ENCODE measurements at regions of chr19 and their contacts with region 1.

Region 1: DNA sequence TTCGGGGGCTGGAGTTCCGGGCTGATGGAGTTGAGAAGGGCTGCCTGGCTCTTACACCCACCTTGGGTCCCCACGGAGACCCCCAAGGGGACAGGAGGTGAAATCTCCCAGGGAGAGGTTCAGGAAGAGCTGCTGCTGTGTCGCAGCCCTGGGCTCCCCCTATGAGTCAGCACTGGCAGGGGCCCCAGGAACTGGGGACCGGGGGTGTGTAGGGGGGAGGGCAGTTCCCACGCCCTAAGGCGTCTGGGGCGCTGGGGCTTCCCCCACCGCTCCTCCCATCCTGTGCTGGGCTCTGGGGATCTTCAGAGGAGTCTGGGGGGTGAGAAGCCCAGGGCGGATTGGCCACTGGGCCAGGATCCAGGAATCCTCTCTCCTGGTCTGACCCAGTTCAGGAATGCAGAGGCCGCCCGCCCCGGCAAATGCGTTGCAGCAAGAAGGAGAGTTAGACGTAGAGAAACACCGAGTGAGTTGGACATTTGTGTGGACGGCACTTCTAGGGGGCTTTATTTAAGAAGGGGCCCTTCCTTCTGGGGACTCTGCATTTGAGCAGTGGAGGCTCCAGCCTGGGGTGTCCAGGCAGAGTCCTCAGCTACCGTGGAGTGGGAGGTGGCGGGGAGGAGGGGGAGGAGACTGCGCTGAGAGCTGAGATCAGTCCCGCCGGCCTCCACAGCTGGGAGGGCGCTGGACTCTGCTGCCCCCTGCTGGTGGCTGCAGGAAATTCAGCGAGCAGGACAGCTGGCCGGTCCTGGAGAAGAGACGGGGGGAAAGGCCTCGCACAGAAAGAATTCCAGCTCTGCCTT is 15.0 kb upstream of the NANOS3 start:
- DNase-seq: peak; percentile 84 to 94 (median 86)
- H3K4me3 ChIP-seq: peak overlapping the region; percentile 91
- H3K4me3 Mint-ChIP-seq: peak overlapping the region; percentile 93 to 99 (median 98)
- H3K27ac ChIP-seq: peak overlapping the region; percentile 96
- H3K27ac Mint-ChIP-seq: peak overlapping the region; percentile 99 to 100 (median 100)
- H3K4me1 ChIP-seq: peaks cover 33% of the 10 kb centered on the region
- H3K4me1 Mint-ChIP-seq: peaks cover 33 to 51% (median 48%) of the 10 kb centered on the region in 3 donors
- H3K27me3 ChIP-seq: peaks cover 21% of the 10 kb centered on the region
- H3K27me3 Mint-ChIP-seq: peaks cover 22 to 28% of the 10 kb centered on the region in 2 donors

Region 2: GRCh38 chr19:13774217-13775191 is 87.4 kb before region 1 on chr19 and contains the start of gene C19orf53:
- CTCF ChIA-PET with region 1: interaction called, 29 read pairs
- POLR2A ChIA-PET with region 1: no interaction called
- DNase-seq: peak; percentile 80 to 88 (median 81)
- H3K4me3 ChIP-seq: peak within 1 kb of the TSS; percentile 87
- H3K4me3 Mint-ChIP-seq: peak within 1 kb of the TSS; percentile 90 to 100 (median 99)
- H3K27ac ChIP-seq: peak within 1 kb of the TSS; percentile 84
- H3K27ac Mint-ChIP-seq: peak within 1 kb of the TSS; percentile 80 to 100 (median 98)
- H3K4me1 ChIP-seq: peaks cover 20% of the 10 kb centered on the region
- H3K4me1 Mint-ChIP-seq: peaks cover 22 to 28% (median 28%) of the 10 kb centered on the region in 3 donors
- H3K27me3 ChIP-seq: no peaks in the 10 kb centered on the region
- H3K27me3 Mint-ChIP-seq: no peaks in the 10 kb centered on the region
- total RNA-seq, gene C19orf53: 131 to 163 TPM

Region 3: GRCh38 chr19:13794757-13795589 is 67.0 kb before region 1 on chr19 and contains the start of gene ZSWIM4:
- CTCF ChIA-PET with region 1: interaction called, 219 read pairs
- POLR2A ChIA-PET with region 1: interaction called, 6 read pairs
- DNase-seq: peak; percentile 86 to 95 (median 88)
- H3K4me3 ChIP-seq: peak within 1 kb of the TSS; percentile 62
- H3K4me3 Mint-ChIP-seq: peak within 1 kb of the TSS; percentile 93 to 98 (median 96)
- H3K27ac ChIP-seq: peak within 1 kb of the TSS; percentile 73
- H3K27ac Mint-ChIP-seq: peak within 1 kb of the TSS; percentile 94 to 97 (median 95)
- H3K4me1 ChIP-seq: peaks cover 23% of the 10 kb centered on the region
- H3K4me1 Mint-ChIP-seq: peaks cover 28 to 46% (median 31%) of the 10 kb centered on the region in 3 donors
- H3K27me3 ChIP-seq: no peaks in the 10 kb centered on the region
- H3K27me3 Mint-ChIP-seq: peaks cover 0 to 2% of the 10 kb centered on the region in 2 donors
- total RNA-seq, gene ZSWIM4: 4.4 to 4.8 TPM

Region 4: GRCh38 chr19:13839130-13839937 is 22.6 kb before region 1 on chr19:
- CTCF ChIA-PET with region 1: interaction called, 53 read pairs
- POLR2A ChIA-PET with region 1: interaction called, 10 read pairs
- DNase-seq: peak; percentile 73 to 95 (median 80)
- H3K4me3 ChIP-seq: peak overlapping the region; percentile 86
- H3K4me3 Mint-ChIP-seq: peak overlapping the region; percentile 92 to 98 (median 94)
- H3K27ac ChIP-seq: peak overlapping the region; percentile 99
- H3K27ac Mint-ChIP-seq: peak overlapping the region; percentile 97 to 100 (median 100)
- H3K4me1 ChIP-seq: peaks cover 82% of the 10 kb centered on the region
- H3K4me1 Mint-ChIP-seq: peaks cover 47 to 76% (median 51%) of the 10 kb centered on the region in 3 donors
- H3K27me3 ChIP-seq: no peaks in the 10 kb centered on the region
- H3K27me3 Mint-ChIP-seq: peaks cover 0 to 38% of the 10 kb centered on the region in 2 donors

Measured in CD8-positive, alpha-beta memory T cell (primary cell).